Caco-2 (cell line): ENCODE measurements at regions of chr14 and their contacts with region 1.

Region 1: DNA sequence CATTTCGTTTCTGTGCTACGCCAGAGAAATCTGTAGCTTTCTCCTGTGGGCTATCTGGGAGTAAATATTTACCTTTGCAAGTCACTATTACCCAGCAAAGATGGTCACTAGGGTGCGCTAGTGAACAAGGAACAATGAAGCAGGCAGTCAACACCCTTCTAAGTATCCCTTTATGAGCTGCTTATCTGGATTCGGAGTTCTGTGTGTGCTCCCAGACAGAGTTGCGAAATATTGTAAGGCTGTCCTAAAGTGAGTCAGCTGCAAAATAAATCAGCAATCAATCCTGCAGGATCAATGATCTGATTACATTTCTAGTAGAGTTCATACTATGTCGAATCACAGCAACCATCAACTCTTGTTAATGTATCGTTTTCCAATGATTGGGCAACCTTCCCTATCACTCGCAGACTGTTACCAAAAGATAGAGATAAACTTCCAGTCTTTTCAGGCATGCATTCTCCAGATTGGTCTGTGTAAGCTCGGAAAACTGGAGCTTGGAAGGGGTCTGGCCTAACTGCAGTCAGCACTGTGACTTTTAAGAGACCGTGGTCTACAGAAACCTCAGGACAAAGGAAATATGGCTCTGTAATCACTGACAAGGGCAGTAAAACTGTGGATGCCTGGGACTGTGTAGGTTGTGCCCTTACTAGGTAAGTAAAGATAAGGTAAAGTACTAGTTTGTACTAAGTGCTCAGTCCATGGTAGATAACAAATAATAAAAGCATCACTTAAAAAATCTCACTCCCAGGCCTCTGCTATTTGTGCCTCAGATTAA is 133.5 kb downstream of the KCNK10 start:
- DNase-seq: peak; percentile 88 to 90
- H3K4me3 ChIP-seq: peak overlapping the region; percentile 6; the same call in 1 of the 2 replicates
- H3K4me3 Mint-ChIP-seq: peak overlapping the region; percentile 71
- H3K27ac Mint-ChIP-seq: peak overlapping the region; percentile 70
- H3K4me1 ChIP-seq: peaks cover 20% of the 10 kb centered on the region
- H3K4me1 Mint-ChIP-seq: peaks cover 18% of the 10 kb centered on the region
- H3K27me3 ChIP-seq: no peaks in the 10 kb centered on the region
- H3K27me3 Mint-ChIP-seq: no peaks in the 10 kb centered on the region
- CTCF ChIP-seq: peak; percentile 60 to 66

Region 2: DNA sequence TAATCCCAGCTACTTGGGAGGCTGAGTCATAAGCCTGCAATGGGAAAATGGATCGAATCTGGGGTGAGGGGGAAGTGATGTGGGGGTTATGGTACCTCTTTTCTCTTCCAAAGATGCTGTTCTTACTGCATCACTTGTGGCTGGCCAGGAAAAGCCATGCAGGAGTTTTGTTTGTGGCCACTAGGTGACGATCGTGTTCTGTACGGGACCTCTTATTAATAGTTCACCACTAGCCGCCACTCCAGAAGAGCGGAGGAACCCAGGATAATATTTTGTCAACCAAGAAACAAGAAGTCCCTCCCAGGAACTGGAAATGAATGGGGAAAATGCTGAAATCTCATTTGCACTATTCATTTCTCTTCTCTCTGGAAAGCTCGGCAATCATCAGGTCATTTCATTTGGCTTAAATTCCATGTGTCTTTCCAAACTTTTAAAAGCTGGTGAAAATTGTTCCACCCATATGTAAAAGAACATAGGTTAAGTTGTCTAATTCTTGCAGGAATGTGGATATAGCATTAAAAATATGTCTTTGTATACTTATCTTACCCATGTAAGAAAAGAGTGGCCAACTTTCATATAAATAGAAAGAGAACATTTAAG is 175.8 kb before region 1 on chr14:
- CTCF ChIA-PET with region 1: interaction called, 12 read pairs
- POLR2A ChIA-PET with region 1: no interaction called
- intact Hi-C with region 1: loop called (anchors 1 kb)
- DNase-seq: peak; percentile 74 to 76
- H3K4me3 ChIP-seq: no peak overlapping the region
- H3K4me3 Mint-ChIP-seq: no peak overlapping the region
- H3K27ac Mint-ChIP-seq: no peak overlapping the region
- H3K4me1 ChIP-seq: no peaks in the 10 kb centered on the region
- H3K4me1 Mint-ChIP-seq: peaks cover 7% of the 10 kb centered on the region
- H3K27me3 ChIP-seq: no peaks in the 10 kb centered on the region
- H3K27me3 Mint-ChIP-seq: peaks cover 3% of the 10 kb centered on the region
- CTCF ChIP-seq: peak; percentile 88 to 95

Region 3: GRCh38 chr14:88364710-88365413 is 175.3 kb after region 1 on chr14:
- CTCF ChIA-PET with region 1: interaction called, 10 read pairs
- POLR2A ChIA-PET with region 1: no interaction called
- intact Hi-C with region 1: loop called (anchors 1 kb)
- DNase-seq: no peak
- H3K4me3 ChIP-seq: no peak overlapping the region
- H3K4me3 Mint-ChIP-seq: no peak overlapping the region
- H3K27ac Mint-ChIP-seq: peak overlapping the region; percentile 78
- H3K4me1 ChIP-seq: peaks cover 28% of the 10 kb centered on the region
- H3K4me1 Mint-ChIP-seq: peaks cover 10% of the 10 kb centered on the region
- H3K27me3 ChIP-seq: no peaks in the 10 kb centered on the region
- H3K27me3 Mint-ChIP-seq: no peaks in the 10 kb centered on the region
- CTCF ChIP-seq: no peak

Region 4: GRCh38 chr14:88385345-88386101 is 195.9 kb after region 1 on chr14 and contains the start of gene SPATA7:
- CTCF ChIA-PET with region 1: interaction called, 124 read pairs
- POLR2A ChIA-PET with region 1: no interaction called
- intact Hi-C with region 1: loop called (anchors 1 kb)
- DNase-seq: peak; percentile 89 to 92
- H3K4me3 ChIP-seq: peak within 1 kb of the TSS; percentile 94
- H3K4me3 Mint-ChIP-seq: peak within 1 kb of the TSS; percentile 98
- H3K27ac Mint-ChIP-seq: peak within 1 kb of the TSS; percentile 89
- H3K4me1 ChIP-seq: no peaks in the 10 kb centered on the region
- H3K4me1 Mint-ChIP-seq: no peaks in the 10 kb centered on the region
- H3K27me3 ChIP-seq: no peaks in the 10 kb centered on the region
- H3K27me3 Mint-ChIP-seq: peaks cover 3% of the 10 kb centered on the region
- CTCF ChIP-seq: no peak
- total RNA-seq, gene SPATA7: 8.2 and 8.7 TPM in 2 replicates

Region 5: DNA sequence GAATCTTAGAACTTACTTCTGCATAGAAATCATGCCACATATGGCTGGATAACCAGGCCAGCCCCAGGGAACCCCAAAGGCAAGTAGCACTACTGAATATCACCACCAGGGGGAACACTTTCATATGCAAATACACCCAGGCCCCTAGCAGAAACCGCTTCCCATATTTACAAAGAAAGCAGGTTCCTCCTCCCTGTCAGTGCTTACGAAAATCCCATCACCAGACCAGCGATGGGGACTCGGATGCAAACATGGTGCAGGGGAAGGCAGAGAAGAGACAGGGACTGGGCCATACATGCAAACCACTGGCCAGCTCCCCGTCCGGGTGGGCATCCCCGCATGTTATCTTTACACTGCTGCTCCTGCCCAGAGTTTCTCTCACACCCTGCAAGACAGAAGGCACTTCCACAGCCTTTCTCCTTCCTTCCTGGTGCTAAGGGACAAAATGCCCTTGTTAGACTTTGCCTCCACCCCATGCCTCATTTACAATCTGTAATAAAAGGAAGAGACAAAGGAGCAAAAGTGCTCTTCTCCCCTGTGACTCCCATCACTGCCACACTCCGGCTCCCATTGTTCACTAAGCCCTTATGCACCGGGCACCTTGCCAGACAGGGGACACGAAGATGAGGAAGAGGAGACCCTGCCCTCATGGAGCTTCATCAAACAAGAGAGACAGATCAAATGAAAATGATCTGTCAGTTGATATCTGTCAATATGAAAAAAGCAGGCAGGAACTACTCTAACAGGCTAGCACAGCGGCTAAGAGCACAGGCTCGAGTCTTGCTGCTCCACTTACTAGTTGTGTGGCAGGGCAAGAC is 302.9 kb after region 1 on chr14:
- CTCF ChIA-PET with region 1: no interaction called
- POLR2A ChIA-PET with region 1: no interaction called
- intact Hi-C with region 1: loop called (anchors 1 kb)
- DNase-seq: peak; percentile 73 to 88
- H3K4me3 ChIP-seq: no peak overlapping the region
- H3K4me3 Mint-ChIP-seq: no peak overlapping the region
- H3K27ac Mint-ChIP-seq: peak overlapping the region; percentile 7
- H3K4me1 ChIP-seq: peaks cover 14% of the 10 kb centered on the region; the same call in 1 of the 2 replicates
- H3K4me1 Mint-ChIP-seq: peaks cover 19% of the 10 kb centered on the region
- H3K27me3 ChIP-seq: no peaks in the 10 kb centered on the region
- H3K27me3 Mint-ChIP-seq: no peaks in the 10 kb centered on the region
- CTCF ChIP-seq: peak; percentile 79 to 88

Region 6: GRCh38 chr14:88505481-88506020 is 315.9 kb after region 1 on chr14:
- CTCF ChIA-PET with region 1: no interaction called
- POLR2A ChIA-PET with region 1: no interaction called
- intact Hi-C with region 1: no loop called
- DNase-seq: no peak
- H3K4me3 ChIP-seq: no peak overlapping the region
- H3K4me3 Mint-ChIP-seq: no peak overlapping the region
- H3K27ac Mint-ChIP-seq: no peak overlapping the region
- H3K4me1 ChIP-seq: no peaks in the 10 kb centered on the region
- H3K4me1 Mint-ChIP-seq: no peaks in the 10 kb centered on the region
- H3K27me3 ChIP-seq: no peaks in the 10 kb centered on the region
- H3K27me3 Mint-ChIP-seq: no peaks in the 10 kb centered on the region
- CTCF ChIP-seq: no peak